Activated CD4-positive, alpha-beta T cell treated with anti-CD3 and anti-CD28 coated beads for 36 hours (primary cell): ENCODE measurements at regions of chr3 and their contacts with region 1.

Region 1: GRCh38 chr3:105868742-105869530 is at the start of gene CBLB:
- DNase-seq: peak; percentile 91
- ATAC-seq: peak; percentile 86
- H3K4me3 Mint-ChIP-seq: peak within 1 kb of the TSS; percentile 100
- H3K27ac Mint-ChIP-seq: peak within 1 kb of the TSS; percentile 100
- H3K4me1 Mint-ChIP-seq: peaks cover 36% of the 10 kb centered on the region
- H3K27me3 Mint-ChIP-seq: no peaks in the 10 kb centered on the region
- total RNA-seq, gene CBLB: 112 to 163 TPM

Region 2: GRCh38 chr3:105618556-105618955 is 250.4 kb before region 1 on chr3:
- CTCF ChIA-PET with region 1: no interaction called
- POLR2A ChIA-PET with region 1: no interaction called
- intact Hi-C with region 1: no loop called
- DNase-seq: no peak
- ATAC-seq: no peak
- H3K4me3 Mint-ChIP-seq: no peak overlapping the region
- H3K27ac Mint-ChIP-seq: no peak overlapping the region
- H3K4me1 Mint-ChIP-seq: no peaks in the 10 kb centered on the region
- H3K27me3 Mint-ChIP-seq: peaks cover 4% of the 10 kb centered on the region

Region 3: GRCh38 chr3:105752744-105753415 is 116.1 kb before region 1 on chr3:
- CTCF ChIA-PET with region 1: no interaction called
- POLR2A ChIA-PET with region 1: no interaction called
- intact Hi-C with region 1: loop called (anchors 2 to 5 kb)
- DNase-seq: peak; percentile 55
- ATAC-seq: peak; percentile 76
- H3K4me3 Mint-ChIP-seq: peak overlapping the region; percentile 42
- H3K27ac Mint-ChIP-seq: peak overlapping the region; percentile 95
- H3K4me1 Mint-ChIP-seq: peaks cover 78% of the 10 kb centered on the region
- H3K27me3 Mint-ChIP-seq: no peaks in the 10 kb centered on the region

Region 4: DNA sequence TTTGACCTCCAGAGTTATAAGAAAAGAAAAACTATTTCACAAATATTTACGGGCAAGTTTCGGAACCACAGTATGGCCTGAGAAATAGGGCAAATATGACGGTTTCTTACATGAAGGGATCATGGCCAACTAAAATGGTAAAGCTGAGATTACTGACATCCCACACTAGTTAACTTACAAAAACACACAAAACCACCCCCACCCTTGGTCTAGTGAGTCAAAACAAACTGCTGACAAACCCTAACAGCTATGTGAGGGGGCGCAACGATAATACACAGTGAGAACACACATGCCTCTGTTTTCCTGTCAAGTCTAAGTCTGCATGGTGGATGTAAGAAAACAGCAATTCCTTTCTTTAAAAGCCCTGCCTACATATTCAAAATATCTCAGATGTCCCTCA is 32.4 kb before region 1 on chr3:
- CTCF ChIA-PET with region 1: interaction called, 8 read pairs
- POLR2A ChIA-PET with region 1: interaction called, 9 read pairs
- intact Hi-C with region 1: loop called in 1 of 2 experiments (anchors 2 kb)
- DNase-seq: peak; percentile 73
- ATAC-seq: peak; percentile 68
- H3K4me3 Mint-ChIP-seq: peak overlapping the region; percentile 15
- H3K27ac Mint-ChIP-seq: peak overlapping the region; percentile 81
- H3K4me1 Mint-ChIP-seq: peaks cover 80% of the 10 kb centered on the region
- H3K27me3 Mint-ChIP-seq: no peaks in the 10 kb centered on the region

Region 5: DNA sequence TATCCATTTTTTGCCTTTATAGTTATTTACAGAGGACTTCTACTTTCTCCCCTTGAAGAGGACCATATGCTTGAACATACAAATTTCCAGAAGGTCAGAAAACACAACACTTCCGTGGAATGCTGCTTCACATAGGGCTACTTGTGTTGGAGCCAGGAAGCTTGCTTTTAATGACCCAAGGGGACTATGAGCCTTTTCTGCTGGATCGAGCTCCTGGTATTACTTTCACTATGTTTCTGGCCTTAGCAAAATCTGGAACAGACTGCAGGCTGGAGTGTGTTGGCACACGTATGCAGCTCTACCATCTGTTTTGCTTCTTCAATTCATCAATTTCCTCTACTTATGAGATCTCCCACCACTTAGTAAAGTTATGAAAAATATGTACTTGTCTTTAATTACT is 69.2 kb after region 1 on chr3:
- CTCF ChIA-PET with region 1: no interaction called
- POLR2A ChIA-PET with region 1: no interaction called
- intact Hi-C with region 1: no loop called
- DNase-seq: no peak
- ATAC-seq: no peak
- H3K4me3 Mint-ChIP-seq: no peak overlapping the region
- H3K27ac Mint-ChIP-seq: no peak overlapping the region
- H3K4me1 Mint-ChIP-seq: peaks cover 6% of the 10 kb centered on the region
- H3K27me3 Mint-ChIP-seq: no peaks in the 10 kb centered on the region

Region 6: GRCh38 chr3:105957722-105958618 is 89.0 kb after region 1 on chr3:
- CTCF ChIA-PET with region 1: no interaction called
- POLR2A ChIA-PET with region 1: no interaction called
- intact Hi-C with region 1: no loop called
- DNase-seq: no peak
- ATAC-seq: no peak
- H3K4me3 Mint-ChIP-seq: no peak overlapping the region
- H3K27ac Mint-ChIP-seq: no peak overlapping the region
- H3K4me1 Mint-ChIP-seq: no peaks in the 10 kb centered on the region
- H3K27me3 Mint-ChIP-seq: no peaks in the 10 kb centered on the region

Region 7: GRCh38 chr3:106206146-106206545 is 337.2 kb after region 1 on chr3:
- CTCF ChIA-PET with region 1: no interaction called
- POLR2A ChIA-PET with region 1: interaction called, 4 read pairs
- intact Hi-C with region 1: loop called (anchors 2 to 5 kb)
- DNase-seq: peak; percentile 31
- ATAC-seq: peak; percentile 67
- H3K4me3 Mint-ChIP-seq: peak overlapping the region; percentile 65
- H3K27ac Mint-ChIP-seq: peak overlapping the region; percentile 94
- H3K4me1 Mint-ChIP-seq: peaks cover 50% of the 10 kb centered on the region
- H3K27me3 Mint-ChIP-seq: no peaks in the 10 kb centered on the region

Region 8: DNA sequence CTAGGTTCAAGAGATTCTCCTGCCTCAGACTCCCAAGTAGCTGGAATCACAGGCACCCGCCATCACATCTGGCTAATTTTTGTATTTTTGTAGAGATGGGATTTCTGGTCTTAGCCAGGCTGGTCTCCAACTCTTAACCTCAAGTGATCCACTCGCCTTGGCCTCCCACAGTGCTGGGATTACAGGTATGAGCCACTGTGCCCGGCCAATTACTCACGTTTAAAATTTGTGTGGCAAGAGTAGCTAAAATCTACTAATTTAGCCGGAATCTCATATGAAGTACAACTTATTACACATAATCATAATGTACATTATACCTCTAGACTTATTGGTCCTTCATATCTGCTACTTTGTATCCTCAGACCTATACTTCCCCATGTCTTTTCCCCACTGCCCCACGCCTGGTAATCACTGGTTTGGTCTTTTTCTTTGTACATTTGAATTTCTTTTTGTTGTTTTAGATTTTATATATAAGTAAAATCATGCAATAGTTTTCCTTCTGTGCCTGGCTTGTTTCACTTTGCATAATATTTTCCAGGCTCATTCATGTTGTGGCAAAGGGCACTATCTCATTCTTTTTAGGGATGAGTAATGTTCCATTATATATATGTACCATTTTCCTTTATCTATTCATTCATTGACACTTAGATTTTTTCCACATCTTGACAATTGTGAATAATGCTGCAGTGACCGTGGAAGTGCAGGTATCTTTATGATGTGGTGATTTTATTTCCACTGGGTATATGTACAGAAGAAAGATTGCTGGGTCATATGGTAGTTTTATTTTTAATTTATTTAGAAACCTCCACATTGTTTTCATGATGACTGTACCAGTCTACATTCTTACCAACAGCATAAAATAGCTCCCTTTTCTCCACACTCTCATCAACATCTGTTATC is 604.9 kb after region 1 on chr3:
- CTCF ChIA-PET with region 1: no interaction called
- POLR2A ChIA-PET with region 1: no interaction called
- intact Hi-C with region 1: loop called in 1 of 2 experiments (anchors 5 kb)
- DNase-seq: peak; percentile 47
- ATAC-seq: peak; percentile 86
- H3K4me3 Mint-ChIP-seq: no peak overlapping the region
- H3K27ac Mint-ChIP-seq: peak overlapping the region; percentile 88
- H3K4me1 Mint-ChIP-seq: peaks cover 28% of the 10 kb centered on the region
- H3K27me3 Mint-ChIP-seq: no peaks in the 10 kb centered on the region